Activated CD4-positive, alpha-beta T cell treated with anti-CD3 and anti-CD28 coated beads, Interleukin-2, amount 10 ng/mL, durations not matched to agents 24 days and 14 days (primary cell): ENCODE measurements at regions of chr10 and their contacts with region 1.

Region 1: GRCh38 chr10:103396064-103396788 is at the starts of genes ATP5MK and PDCD11:
- DNase-seq: peak; percentile 99
- H3K4me3 Mint-ChIP-seq: peak within 1 kb of the TSS; percentile 87
- H3K27ac Mint-ChIP-seq: peak within 1 kb of the TSS; percentile 81
- H3K4me1 Mint-ChIP-seq: peaks cover 41% of the 10 kb centered on the region
- H3K27me3 Mint-ChIP-seq: no peaks in the 10 kb centered on the region
- total RNA-seq, gene ATP5MK: 477 and 504 TPM in 2 replicates
- total RNA-seq, gene PDCD11: 103 and 105 TPM in 2 replicates

Region 2: GRCh38 chr10:102220612-102221011 is 1175.6 kb before region 1 on chr10:
- intact Hi-C with region 1: no loop called
- DNase-seq: no peak
- H3K4me3 Mint-ChIP-seq: no peak overlapping the region
- H3K27ac Mint-ChIP-seq: no peak overlapping the region
- H3K4me1 Mint-ChIP-seq: peaks cover 2% of the 10 kb centered on the region
- H3K27me3 Mint-ChIP-seq: peaks cover 35% of the 10 kb centered on the region

Region 3: DNA sequence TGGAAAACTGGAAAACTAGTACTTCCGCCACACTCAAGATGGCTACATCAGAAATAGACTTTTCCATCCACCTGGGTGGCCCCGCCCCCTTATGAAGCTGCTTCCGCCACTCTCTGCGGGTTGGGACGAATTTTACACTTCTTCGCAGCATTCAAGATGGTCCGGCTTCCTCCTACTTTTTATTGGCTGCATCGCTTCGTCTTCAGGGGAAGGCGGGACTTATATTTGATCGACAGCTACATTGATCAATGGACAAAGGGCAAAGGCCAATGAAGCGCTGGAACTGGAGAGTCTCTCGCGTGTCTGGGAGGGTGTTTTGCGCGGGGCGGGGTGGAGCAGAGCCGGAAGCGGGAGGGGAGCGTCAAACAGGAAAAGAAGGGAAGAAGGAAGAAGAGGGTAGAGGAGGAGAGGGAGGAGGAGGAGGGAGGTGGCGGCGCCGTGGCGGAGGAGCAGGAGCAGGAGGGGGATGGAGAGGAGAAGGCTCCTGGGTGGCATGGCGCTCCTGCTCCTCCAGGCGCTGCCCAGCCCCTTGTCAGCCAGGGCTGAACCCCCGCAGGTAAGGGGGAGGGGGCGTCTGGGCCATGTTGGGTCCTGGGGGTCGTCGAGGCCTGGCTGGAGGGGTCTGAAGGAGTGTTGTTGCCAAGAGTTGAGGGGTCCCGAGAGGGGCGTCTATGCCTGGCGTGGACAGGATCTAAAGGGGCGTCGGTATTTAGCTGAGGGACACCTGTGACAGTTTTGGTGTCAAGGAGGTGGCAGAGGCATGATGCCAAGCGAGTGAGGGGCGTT is 652.4 kb before region 1 on chr10 and contains the start of gene WBP1L:
- intact Hi-C with region 1: loop called (anchors 5 kb)
- DNase-seq: peak; percentile 98
- H3K4me3 Mint-ChIP-seq: peak within 1 kb of the TSS; percentile 83
- H3K27ac Mint-ChIP-seq: peak within 1 kb of the TSS; percentile 81
- H3K4me1 Mint-ChIP-seq: peaks cover 38% of the 10 kb centered on the region
- H3K27me3 Mint-ChIP-seq: no peaks in the 10 kb centered on the region
- total RNA-seq, gene WBP1L: 15.6 and 15.8 TPM in 2 replicates

Region 4: GRCh38 chr10:103307594-103307993 is 88.6 kb before region 1 on chr10:
- intact Hi-C with region 1: no loop called
- DNase-seq: no peak
- H3K4me3 Mint-ChIP-seq: no peak overlapping the region
- H3K27ac Mint-ChIP-seq: no peak overlapping the region
- H3K4me1 Mint-ChIP-seq: no peaks in the 10 kb centered on the region
- H3K27me3 Mint-ChIP-seq: no peaks in the 10 kb centered on the region

Region 5: GRCh38 chr10:103350501-103351260 is 45.5 kb before region 1 on chr10 and contains the start of gene PCGF6:
- intact Hi-C with region 1: loop called (anchors 1 kb)
- DNase-seq: peak; percentile 94
- H3K4me3 Mint-ChIP-seq: peak within 1 kb of the TSS; percentile 96
- H3K27ac Mint-ChIP-seq: peak within 1 kb of the TSS; percentile 95
- H3K4me1 Mint-ChIP-seq: peaks cover 6% of the 10 kb centered on the region
- H3K27me3 Mint-ChIP-seq: no peaks in the 10 kb centered on the region
- total RNA-seq, gene PCGF6: 19.3 and 19.7 TPM in 2 replicates

Region 6: DNA sequence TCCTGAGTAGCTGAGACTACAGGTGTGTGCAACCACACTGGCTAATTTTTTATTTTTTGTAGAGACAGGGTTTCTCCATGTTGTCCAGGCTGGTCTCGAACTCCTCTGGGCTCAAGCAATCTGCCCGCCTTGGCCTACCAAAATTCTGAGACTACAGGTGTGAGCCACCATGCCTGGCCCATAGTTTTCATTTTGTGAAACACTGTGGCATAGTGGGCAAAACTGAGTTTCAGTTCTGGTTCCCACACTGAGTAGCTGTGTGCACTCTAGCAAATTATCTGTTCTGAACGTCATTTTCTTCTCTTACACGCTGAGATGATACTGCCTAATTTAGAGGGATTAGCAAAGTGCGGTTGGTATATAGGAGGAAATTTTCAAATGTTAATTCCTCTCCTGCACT is 13.5 kb before region 1 on chr10:
- intact Hi-C with region 1: no loop called
- DNase-seq: no peak
- H3K4me3 Mint-ChIP-seq: no peak overlapping the region
- H3K27ac Mint-ChIP-seq: no peak overlapping the region
- H3K4me1 Mint-ChIP-seq: no peaks in the 10 kb centered on the region
- H3K27me3 Mint-ChIP-seq: no peaks in the 10 kb centered on the region